ENCODE measurements at regions of chr14 and their contacts with region 1.

Region 1: GRCh38 chr14:60331201-60332045 is 82.4 kb downstream of the PPM1A start:
- H3K4me3 ChIP-seq: peak overlapping the region; percentile 13
- H3K27ac ChIP-seq: no peak overlapping the region; the same call in 1 of the 2 replicates
- H3K4me1 ChIP-seq: no peaks in the 10 kb centered on the region
- CTCF ChIP-seq: 0 out of 2 replicates have a peak, but pooled peaks have one; percentile 26

Region 2: GRCh38 chr14:60363275-60363674 is 31.9 kb after region 1 on chr14:
- CTCF ChIA-PET with region 1: no interaction called
- POLR2A ChIA-PET with region 1: no interaction called
- H3K4me3 ChIP-seq: no peak overlapping the region
- H3K27ac ChIP-seq: no peak overlapping the region
- H3K4me1 ChIP-seq: no peaks in the 10 kb centered on the region
- CTCF ChIP-seq: no peak

Region 3: GRCh38 chr14:60561845-60562746 is 230.7 kb after region 1 on chr14:
- CTCF ChIA-PET with region 1: interaction called, 10 read pairs
- POLR2A ChIA-PET with region 1: no interaction called
- H3K4me3 ChIP-seq: no peak overlapping the region
- H3K27ac ChIP-seq: no peak overlapping the region
- H3K4me1 ChIP-seq: peaks cover 5% of the 10 kb centered on the region; the same call in 1 of the 2 replicates
- CTCF ChIP-seq: peak; percentile 79

Measured in HEK293 (cell line).